ENCODE measurements at regions of chr15 and their contacts with region 1.

Region 1: DNA sequence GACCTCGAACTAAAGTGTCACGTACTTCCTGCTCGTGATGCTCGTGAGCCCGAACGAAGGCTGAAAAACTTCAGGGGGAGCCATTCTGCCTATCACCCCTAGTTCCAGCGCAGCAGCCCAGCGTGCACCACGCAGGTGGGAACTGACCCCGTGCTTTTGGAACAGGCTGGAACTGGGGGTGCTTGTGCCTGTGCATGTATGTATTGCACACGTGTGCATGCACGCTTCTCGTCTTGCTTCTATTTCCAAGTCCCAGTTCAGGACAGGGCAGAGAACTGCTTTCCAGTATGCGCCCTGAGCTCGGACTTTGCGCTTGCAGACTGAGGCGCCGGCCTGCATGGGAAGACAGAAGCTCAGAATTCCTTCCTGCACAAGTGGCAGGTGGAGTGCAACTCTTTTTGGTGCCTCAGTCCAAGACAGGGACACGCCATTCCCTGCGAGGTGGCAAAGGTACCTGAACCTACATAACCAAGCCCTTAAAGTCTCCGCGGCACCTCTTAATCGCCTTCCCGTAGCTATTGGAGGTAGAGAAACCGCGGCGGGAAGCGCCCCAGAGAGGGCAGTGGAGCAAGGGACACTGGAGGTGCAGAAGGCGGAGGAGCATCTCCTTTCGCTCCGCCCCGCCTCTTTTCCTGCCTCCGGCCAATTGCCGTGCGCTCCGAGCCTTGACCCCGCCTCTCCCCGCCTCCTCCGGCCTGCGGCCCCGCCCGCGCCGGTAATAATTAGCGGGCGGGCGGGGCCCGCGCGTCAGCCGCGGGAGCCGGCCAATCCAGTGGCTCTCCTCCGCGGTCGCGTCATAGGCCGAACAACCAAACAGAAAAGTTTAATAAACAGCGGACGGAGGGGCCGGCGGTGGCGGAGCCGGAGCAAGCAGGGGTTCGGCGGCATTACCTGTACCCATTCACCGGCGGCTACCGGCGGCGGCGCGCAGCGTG is at the start of gene ZFAND6:
- DNase-seq: peak; percentile 90 to 94
- ATAC-seq: peak; percentile 92 to 94
- H3K4me3 ChIP-seq: peak within 1 kb of the TSS; percentile 66 to 90 (median 78)
- H3K27ac ChIP-seq: peak within 1 kb of the TSS; percentile 84 to 95 (median 93)
- H3K4me1 ChIP-seq: peaks cover 29 to 30% of the 10 kb centered on the region in 2 donors
- H3K27me3 ChIP-seq: no peaks in the 10 kb centered on the region
- CTCF ChIP-seq: peak in 2 of 5 experiments; percentile 24 to 25
- POLR2A ChIP-seq: peak; percentile 88 to 97
- total RNA-seq, gene ZFAND6: 95.4 to 196 (median 146) TPM

Region 2: DNA sequence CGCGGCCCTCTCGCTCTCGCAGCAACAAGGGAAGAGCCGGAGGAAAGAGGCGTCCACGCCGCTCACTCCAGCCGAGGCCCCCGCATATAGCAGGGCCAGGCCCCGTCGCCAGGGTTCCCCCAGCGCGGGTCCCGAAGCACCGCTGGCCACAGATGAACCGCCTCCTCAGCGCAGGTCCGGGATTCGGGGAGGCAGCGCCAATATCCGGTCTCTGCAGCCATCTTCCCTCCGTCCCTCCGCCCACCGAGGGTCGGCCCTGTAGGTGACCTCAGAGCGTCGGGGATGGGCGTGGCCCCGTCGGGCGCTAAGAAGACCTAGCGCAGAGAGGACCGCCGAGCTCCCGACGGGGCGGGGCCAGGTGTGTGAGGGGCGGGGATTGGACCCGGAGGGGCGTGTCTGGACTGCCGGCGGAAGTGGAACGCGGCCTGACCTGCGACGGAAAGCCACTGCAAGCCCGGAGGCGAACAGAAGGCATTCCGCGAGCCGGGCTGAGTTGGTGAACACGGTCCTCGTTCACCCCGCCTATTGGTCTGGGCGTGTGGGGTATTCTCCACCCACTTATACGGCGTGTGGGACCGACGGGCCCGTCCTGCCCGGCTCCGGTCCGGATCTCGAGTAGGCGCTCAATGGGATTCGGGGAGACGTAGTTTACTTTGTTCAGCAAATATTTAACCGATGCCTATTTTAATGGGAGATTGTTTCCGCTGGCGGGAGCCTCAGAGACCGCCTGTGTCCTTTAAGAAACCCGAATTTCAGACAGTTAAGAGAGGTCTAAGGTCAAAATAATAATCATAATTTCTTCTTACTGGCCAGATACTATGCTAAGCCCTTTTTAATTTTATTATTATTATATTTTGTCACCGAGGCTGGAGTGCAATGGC is 135.4 kb before region 1 on chr15:
- in situ Hi-C with region 1: no loop called
- intact Hi-C with region 1: loop called (anchors 10 kb)
- DNase-seq: peak; percentile 69 to 90
- ATAC-seq: peak; percentile 85 to 90
- H3K4me3 ChIP-seq: peak overlapping the region; percentile 84 to 91 (median 86)
- H3K27ac ChIP-seq: peak overlapping the region; percentile 83 to 86 (median 86)
- H3K4me1 ChIP-seq: peaks cover 5 to 10% of the 10 kb centered on the region in 2 donors
- H3K27me3 ChIP-seq: peaks cover 0 to 7% (median 5%) of the 10 kb centered on the region in 3 donors
- CTCF ChIP-seq: no peak
- POLR2A ChIP-seq: peak; percentile 70 to 75

Region 3: DNA sequence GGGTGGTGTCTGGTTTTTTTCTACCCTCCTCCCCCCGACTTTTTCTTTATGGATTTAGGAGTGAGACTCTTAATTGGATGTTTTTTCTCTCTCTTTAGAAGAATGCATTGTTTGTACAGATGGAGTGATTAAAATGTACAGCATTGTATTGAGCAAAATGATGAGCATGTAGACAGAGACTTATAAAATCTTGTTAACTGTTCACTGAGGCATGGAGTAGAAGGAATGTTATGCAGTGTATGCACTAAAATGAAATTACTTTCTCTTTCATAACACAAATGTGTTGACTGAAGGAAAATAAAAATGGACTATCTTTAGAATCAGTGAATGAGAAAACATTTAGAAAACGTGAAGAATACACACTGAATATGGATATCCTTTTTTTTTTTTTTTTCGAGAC is 40.1 kb after region 1 on chr15:
- in situ Hi-C with region 1: no loop called
- intact Hi-C with region 1: loop called (anchors 5 kb)
- DNase-seq: no peak
- ATAC-seq: no peak
- H3K4me3 ChIP-seq: no peak overlapping the region
- H3K27ac ChIP-seq: no peak overlapping the region
- H3K4me1 ChIP-seq: peaks cover 43 to 54% of the 10 kb centered on the region in 2 donors
- H3K27me3 ChIP-seq: no peaks in the 10 kb centered on the region
- CTCF ChIP-seq: no peak
- POLR2A ChIP-seq: no peak

Region 4: DNA sequence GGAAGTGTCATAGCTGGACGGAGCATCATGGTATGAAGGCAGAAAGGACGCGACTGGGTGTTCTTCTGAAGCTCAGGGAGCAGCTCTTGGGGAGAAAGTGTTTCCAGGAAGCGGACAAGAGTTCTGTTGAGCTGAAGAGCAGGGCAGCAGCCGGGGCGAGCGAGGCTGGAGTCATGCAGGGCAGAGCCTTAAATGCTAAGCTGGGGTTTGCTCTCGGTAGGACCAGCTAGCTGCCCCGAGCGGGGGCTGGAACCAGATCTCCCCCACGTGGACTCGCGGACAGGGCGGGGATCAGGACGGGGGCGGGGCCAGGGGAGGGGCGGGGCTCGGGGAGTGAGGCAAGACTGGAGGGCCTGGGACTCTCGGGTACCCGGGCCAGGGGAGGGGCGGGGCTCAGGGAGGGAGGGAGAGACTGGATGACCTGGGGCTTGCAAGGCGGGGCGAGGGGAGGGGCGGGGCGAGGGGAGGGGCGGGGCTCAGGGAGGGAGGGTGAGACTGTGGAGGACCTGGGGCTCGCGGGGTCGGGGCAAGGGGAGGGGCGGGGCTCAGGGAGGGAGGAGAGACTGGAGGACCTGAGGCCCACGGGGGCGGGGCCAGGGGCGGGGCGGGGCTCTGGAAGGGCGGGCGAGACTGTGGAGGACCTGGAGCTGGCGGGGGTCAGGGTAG is 93.2 kb after region 1 on chr15:
- in situ Hi-C with region 1: loop called in 2 of 4 experiments (anchors 10 to 25 kb)
- intact Hi-C with region 1: loop called (anchors 1 kb)
- DNase-seq: peak; percentile 97 to 99
- ATAC-seq: peak; percentile 66 to 77
- H3K4me3 ChIP-seq: peak overlapping the region; percentile 64 to 91 (median 71)
- H3K27ac ChIP-seq: peak overlapping the region; percentile 86 to 91 (median 90)
- H3K4me1 ChIP-seq: peaks cover 38 to 45% of the 10 kb centered on the region in 2 donors
- H3K27me3 ChIP-seq: no peaks in the 10 kb centered on the region
- CTCF ChIP-seq: no peak
- POLR2A ChIP-seq: peak; percentile 27 to 74